ENCODE measurements at regions of chr6 and their contacts with region 1.

Region 1: DNA sequence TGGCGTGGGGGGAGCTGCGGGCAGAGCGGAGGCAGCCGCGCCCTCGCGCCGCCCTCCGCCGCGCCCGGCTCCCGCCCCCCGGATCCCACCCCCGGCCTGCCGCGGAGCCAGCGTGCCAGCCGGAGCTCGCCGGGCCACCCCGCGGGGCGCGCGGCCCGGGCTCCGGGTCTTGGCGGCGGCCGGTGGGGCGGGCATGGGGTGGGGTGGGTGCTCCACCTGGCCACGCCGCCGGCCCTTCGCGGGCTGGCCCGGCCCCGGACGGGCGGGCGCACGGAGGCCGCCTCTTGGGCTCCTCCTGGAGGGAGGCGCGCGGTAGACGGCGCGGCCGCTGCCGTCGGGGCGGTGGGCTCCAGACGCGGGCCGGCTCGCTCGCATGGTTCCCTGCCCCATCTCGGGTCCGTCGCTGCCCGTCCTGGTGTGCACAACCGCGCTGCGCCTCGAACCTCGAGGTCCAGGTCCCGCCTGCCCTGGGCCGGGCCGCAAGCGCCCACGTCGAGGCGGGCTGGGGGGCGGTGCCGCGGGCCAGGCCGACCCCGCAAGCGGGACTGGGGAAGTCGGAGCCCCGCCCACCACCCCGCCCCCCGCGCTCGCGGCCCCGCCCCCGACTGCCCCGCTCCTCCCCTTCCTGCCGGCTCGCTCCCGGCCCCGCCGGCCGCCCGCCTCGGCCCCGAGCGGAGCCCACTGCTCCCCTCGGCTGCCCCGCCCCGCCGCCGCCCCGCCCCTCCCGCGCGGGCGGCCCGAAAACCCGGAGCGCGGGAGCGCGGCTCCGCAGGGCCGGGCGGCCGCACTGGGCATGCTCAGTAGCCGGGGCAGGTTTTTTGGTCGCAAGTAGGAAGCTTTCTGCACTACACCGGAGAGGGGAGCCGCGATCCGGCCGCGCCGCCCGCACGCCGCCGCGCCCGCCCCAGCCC is at the start of gene CDYL:
- DNase-seq: peak; percentile 85 to 90 (median 87)
- H3K4me3 ChIP-seq: peak within 1 kb of the TSS in 2 of 4 donors; percentile 38 to 90
- H3K27ac ChIP-seq: peak within 1 kb of the TSS in 3 of 5 donors; percentile 65 to 95 (median 66)
- H3K4me1 ChIP-seq: peaks cover 0 to 20% of the 10 kb centered on the region in 2 donors
- H3K27me3 ChIP-seq: no peaks in the 10 kb centered on the region
- CTCF ChIP-seq: peak in 3 of 6 experiments; percentile 17 to 45 (median 35)
- POLR2A ChIP-seq: peak; percentile 49 to 58
- total RNA-seq, gene CDYL: 19.5 to 47.1 (median 27.0) TPM

Region 2: DNA sequence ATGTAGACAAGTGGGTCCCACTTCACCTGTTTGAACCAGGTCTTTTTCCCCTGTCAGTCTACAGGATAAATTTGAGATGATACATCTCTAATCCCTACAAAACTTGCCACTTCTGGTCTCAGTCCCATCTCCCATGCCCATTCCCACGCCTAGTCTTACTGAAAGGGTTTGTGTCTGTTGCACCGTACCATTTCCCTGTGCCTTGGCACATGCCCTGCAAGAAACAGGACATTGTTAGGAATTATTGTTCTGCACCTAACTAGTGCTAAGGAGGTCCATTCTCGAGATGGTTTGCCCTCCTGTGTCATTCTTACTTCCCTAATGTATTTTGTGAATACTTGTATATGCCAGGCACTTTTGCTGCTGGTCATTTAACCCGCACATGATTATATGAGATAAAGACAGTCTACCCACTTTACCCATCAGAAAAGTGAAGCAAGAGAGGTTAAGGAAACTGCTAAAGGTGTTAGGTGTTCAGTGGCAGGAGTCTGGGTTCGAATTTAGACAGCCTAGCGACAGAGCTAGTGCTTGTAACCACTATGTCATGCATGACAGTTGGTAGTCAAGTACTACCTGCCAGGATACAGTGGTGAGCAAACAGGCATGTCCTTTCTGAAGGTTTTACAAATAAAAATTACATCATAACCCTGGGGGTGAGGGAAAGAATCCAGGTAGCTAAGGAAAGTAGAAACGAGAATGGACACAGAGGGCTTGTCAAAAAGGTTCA is 709.6 kb before region 1 on chr6:
- intact Hi-C with region 1: no loop called
- DNase-seq: no peak
- H3K4me3 ChIP-seq: no peak overlapping the region
- H3K27ac ChIP-seq: no peak overlapping the region
- H3K4me1 ChIP-seq: no peaks in the 10 kb centered on the region
- H3K27me3 ChIP-seq: no peaks in the 10 kb centered on the region
- CTCF ChIP-seq: no peak
- POLR2A ChIP-seq: no peak

Region 3: DNA sequence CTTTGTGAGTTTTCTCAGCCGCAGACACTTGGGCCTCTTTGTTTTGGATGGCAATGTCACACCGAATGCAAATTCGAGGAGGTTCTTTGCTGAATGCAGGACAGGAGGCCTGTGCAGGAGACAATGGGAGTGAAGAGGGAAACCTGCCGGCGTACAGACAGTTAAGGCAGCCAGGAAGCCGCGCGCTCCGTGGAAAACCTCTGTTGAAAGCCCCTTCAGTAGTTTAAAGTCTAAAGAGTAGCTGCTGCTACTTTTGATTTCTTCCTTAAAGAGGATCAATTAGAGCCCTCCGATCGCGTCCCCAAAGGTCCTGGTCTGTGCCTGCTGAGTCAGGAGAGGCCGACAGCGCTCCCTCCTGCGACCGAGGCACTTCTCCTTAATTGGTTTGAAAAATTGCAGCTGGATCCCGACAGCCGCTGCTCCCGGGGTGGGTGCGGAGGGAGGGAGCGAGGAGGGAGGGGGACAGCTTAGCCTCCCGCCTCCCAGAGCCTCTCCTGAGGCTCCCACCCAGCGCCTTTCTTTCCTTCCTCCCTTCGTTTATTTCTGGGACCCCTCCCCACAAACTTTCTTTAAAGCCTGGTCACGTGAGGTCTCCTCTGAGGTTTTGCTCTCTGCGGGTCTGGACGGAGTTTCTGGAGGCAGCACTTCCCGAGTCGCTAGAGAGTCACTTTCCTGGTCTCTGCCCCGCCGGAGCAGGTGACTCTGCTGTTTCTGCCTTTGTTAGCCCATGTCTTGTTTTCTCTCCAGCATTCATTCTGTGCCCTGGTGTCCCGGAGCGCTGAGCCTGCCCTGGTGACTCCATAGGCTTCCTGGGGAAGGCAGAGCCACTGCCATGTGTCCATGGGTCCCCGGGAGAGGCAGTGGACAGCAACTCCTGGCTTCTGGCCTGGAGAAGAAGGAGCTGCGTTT is 250.3 kb after region 1 on chr6:
- intact Hi-C with region 1: loop called in 1 of 2 experiments (anchors 10 kb)
- DNase-seq: peak; percentile 71 to 84 (median 75)
- H3K4me3 ChIP-seq: peak overlapping the region; percentile 4 to 51 (median 38)
- H3K27ac ChIP-seq: peak overlapping the region; percentile 51 to 87 (median 81)
- H3K4me1 ChIP-seq: peaks cover 6 to 12% of the 10 kb centered on the region in 2 donors
- H3K27me3 ChIP-seq: no peaks in the 10 kb centered on the region
- CTCF ChIP-seq: peak in 2 of 6 experiments; percentile 13 to 23
- POLR2A ChIP-seq: peak in 1 of 2 donors; percentile 62